A549 (cell line): ENCODE measurements at regions of chrX and their contacts with region 1.

Region 1: DNA sequence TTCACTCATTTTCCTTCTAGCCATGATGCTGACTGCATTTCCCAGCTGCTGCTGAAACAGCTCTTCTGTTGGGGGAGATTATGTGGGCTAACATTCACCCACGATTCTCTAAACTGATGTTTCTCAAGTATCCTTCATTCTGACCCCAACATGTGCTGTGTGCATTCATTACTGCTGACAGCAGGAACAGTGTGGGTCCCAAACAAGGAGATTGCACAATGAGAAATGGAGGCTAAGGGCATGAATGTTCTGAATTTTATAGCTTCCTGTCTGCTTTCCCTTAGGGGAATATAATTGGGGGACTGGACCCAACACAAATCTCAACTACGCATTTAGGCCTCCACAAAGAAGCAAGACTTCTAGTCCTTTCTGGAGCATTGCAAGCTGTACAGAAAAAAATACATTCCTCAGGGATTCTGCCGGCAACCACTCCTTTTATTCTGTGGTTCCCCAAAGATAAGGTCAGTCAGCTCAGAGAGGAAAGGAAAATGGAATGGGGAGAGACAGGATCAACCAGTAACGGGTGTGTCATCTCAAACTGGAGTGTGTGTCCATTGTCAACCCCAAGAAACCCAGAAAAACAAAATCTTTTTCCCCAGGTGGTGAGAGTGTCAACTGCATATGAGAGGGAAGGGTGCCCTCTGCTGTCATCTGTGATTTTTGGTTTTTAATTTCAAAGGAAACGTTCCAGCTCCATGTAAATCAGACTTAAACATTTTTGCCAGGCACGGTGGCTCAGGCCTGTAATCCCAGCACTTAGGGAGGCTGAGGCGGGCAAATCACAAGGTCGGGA is 81.5 kb upstream of the EGFL6 start:
- DNase-seq: peak; percentile 48 to 82
- ATAC-seq: peak; percentile 85 to 93
- H3K4me3 ChIP-seq: no peak overlapping the region
- H3K27ac ChIP-seq: peak overlapping the region; percentile 86 to 88
- H3K4me1 ChIP-seq: peaks cover 31% of the 10 kb centered on the region
- CTCF ChIP-seq: peak; percentile 72
- EP300 ChIP-seq: no peak
- POLR2A ChIP-seq: no peak
- RAD21 ChIP-seq: peak; percentile 96 to 98

Region 2: GRCh38 chrX:12814420-12814819 is 673.5 kb before region 1 on chrX:
- CTCF ChIA-PET with region 1: interaction called, 19 read pairs
- POLR2A ChIA-PET with region 1: no interaction called
- DNase-seq: peak; percentile 30 to 59
- ATAC-seq: peak; percentile 71 to 82; a peak in 4 of 6 replicates
- H3K4me3 ChIP-seq: no peak overlapping the region
- H3K27ac ChIP-seq: no peak overlapping the region
- H3K4me1 ChIP-seq: no peaks in the 10 kb centered on the region
- CTCF ChIP-seq: peak; percentile 76
- EP300 ChIP-seq: no peak
- POLR2A ChIP-seq: no peak
- RAD21 ChIP-seq: peak; percentile 79

Region 3: GRCh38 chrX:12946838-12947544 is 540.9 kb before region 1 on chrX:
- CTCF ChIA-PET with region 1: interaction called, 110 read pairs
- POLR2A ChIA-PET with region 1: interaction called, 5 read pairs
- DNase-seq: peak; percentile 55 to 88
- ATAC-seq: peak; percentile 69 to 85; a peak in 5 of 6 replicates
- H3K4me3 ChIP-seq: no peak overlapping the region
- H3K27ac ChIP-seq: peak overlapping the region; percentile 80 to 91
- H3K4me1 ChIP-seq: peaks cover 37% of the 10 kb centered on the region
- CTCF ChIP-seq: peak; percentile 91
- EP300 ChIP-seq: no peak
- POLR2A ChIP-seq: no peak
- RAD21 ChIP-seq: peak; percentile 87 to 93

Region 4: GRCh38 chrX:12955882-12956703 is 531.8 kb before region 1 on chrX:
- CTCF ChIA-PET with region 1: interaction called, 110 read pairs
- POLR2A ChIA-PET with region 1: no interaction called
- DNase-seq: peak in 1 of 2 experiments; percentile 50
- ATAC-seq: peak; percentile 57 to 64; a peak in 5 of 6 replicates
- H3K4me3 ChIP-seq: no peak overlapping the region
- H3K27ac ChIP-seq: peak overlapping the region; percentile 78 to 95
- H3K4me1 ChIP-seq: peaks cover 21% of the 10 kb centered on the region
- CTCF ChIP-seq: no peak
- EP300 ChIP-seq: no peak
- POLR2A ChIP-seq: no peak
- RAD21 ChIP-seq: no peak

Region 5: DNA sequence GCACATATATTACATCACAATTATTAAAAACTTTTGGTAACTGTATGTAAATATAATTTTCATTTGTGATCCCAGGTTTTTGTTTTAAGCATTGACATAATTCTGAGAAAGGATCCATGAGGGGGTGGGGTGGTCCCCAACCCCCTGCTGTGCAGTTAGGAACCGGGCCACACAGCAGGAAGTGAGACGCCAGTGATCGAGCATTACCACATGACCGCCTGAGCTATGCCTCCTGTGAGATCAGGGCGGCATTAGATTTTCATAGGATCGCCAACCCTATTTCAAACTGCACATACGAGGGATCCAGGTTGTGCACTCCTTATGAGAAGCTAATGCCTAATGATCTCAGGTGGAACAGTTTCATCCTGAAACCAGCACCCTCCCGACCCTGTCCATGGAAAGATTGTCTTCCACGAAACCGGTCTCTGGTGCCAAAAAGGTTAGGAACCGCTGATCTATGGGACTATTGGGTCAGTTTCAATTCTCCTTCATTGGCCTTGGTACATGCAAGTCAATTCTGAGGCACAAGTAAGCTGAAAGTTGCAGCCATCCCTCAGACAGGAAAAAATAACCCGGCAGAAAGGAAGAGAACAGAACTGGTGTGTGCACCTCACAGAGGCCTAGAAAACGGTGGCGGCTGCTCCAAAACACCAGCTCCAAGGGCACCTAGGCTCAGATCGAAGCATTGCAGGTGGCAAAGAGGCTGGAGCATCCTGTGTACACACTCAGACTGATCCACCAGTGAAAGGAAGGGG is 520.0 kb before region 1 on chrX:
- CTCF ChIA-PET with region 1: interaction called, 11 read pairs
- POLR2A ChIA-PET with region 1: no interaction called
- DNase-seq: no peak
- ATAC-seq: no peak
- H3K4me3 ChIP-seq: no peak overlapping the region
- H3K27ac ChIP-seq: no peak overlapping the region
- H3K4me1 ChIP-seq: peaks cover 8% of the 10 kb centered on the region; the same call in 1 of the 3 replicates
- CTCF ChIP-seq: no peak
- EP300 ChIP-seq: no peak
- POLR2A ChIP-seq: no peak
- RAD21 ChIP-seq: no peak

Region 6: GRCh38 chrX:12974796-12975669 is 512.9 kb before region 1 on chrX and contains the start of gene TMSB4X:
- CTCF ChIA-PET with region 1: interaction called, 14 read pairs
- POLR2A ChIA-PET with region 1: interaction called, 13 read pairs
- DNase-seq: peak; percentile 69 to 93
- ATAC-seq: peak; percentile 83 to 84
- H3K4me3 ChIP-seq: peak within 1 kb of the TSS; percentile 94
- H3K27ac ChIP-seq: peak within 1 kb of the TSS; percentile 97 to 99
- H3K4me1 ChIP-seq: peaks cover 37% of the 10 kb centered on the region
- CTCF ChIP-seq: no peak
- EP300 ChIP-seq: no peak
- POLR2A ChIP-seq: peak; percentile 99
- RAD21 ChIP-seq: peak; percentile 4 to 31; a peak in 2 of 5 replicates
- polyA plus RNA-seq, gene TMSB4X: 3,130 and 3,742 TPM in 2 replicates

Region 7: DNA sequence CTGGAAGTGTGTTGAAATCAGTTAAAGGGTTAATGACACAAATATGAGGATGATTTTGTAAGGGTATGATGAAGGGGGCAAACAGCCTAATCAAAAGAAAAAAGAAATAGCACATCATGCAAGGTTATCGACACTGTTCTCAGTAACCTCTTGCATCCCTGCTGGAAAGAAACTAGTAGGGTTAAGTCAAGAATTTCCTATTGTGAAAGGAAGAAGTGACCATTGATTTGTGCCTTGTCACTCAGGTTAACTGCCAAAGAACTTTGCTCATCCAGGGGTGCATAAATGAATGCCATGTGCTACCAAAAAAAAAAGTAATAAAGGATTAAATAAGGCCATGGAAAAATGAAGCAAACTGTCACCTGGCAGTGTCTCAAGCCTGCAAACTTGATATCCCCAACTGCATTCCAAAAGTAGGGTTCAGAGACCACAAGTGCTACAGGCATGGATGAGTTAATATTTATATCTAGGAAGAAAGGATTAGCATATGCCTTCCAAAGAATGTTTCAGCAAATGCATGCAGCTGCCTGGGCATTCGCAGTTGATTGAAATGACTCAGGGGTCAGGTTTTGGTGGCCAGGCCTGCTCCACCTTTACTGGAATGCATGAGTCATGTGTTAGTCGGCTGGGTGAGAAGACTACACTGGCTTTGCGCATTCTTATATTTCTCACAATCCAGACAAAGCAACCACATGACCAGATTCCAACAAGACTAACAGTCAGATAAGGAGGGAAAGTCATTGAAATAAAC is 89.7 kb before region 1 on chrX:
- CTCF ChIA-PET with region 1: interaction called, 20 read pairs
- POLR2A ChIA-PET with region 1: no interaction called
- DNase-seq: peak; percentile 75 to 99
- ATAC-seq: peak; percentile 99 to 100
- H3K4me3 ChIP-seq: no peak overlapping the region
- H3K27ac ChIP-seq: peak overlapping the region; percentile 98
- H3K4me1 ChIP-seq: peaks cover 32% of the 10 kb centered on the region
- CTCF ChIP-seq: no peak
- EP300 ChIP-seq: peak; percentile 92 to 94
- POLR2A ChIP-seq: no peak
- RAD21 ChIP-seq: peak; percentile 53 to 77